ENCODE measurements at regions of chr17 and their contacts with region 1.

Region 1: GRCh38 chr17:10727192-10727976 is 2.4 kb downstream of the TMEM220 start:
- DNase-seq: no peak
- ATAC-seq: no peak
- H3K4me3 ChIP-seq: no peak overlapping the region
- H3K27ac ChIP-seq: no peak overlapping the region
- H3K4me1 ChIP-seq: peaks cover 3% of the 10 kb centered on the region
- H3K27me3 ChIP-seq: no peaks in the 10 kb centered on the region
- CTCF ChIP-seq: no peak

Region 2: DNA sequence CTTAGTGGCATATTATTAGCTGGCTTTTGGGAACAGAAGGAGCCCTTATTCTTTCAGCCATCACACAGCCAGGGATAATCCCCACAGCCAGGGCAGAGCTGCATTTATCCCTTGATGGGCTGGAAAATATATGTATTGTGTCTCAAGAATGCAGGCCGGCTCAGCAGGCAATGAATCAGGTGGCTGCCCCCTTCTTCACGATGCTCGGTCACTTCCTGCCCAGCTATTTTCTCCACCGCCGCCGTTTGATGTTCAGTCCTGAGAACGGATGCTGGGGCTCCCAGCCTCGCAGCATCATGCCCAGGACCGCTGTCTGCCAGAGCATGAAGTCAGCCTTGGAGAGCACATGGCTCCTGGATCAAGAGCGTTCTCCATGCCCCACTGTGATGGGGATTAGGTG is 65.9 kb before region 1 on chr17:
- intact Hi-C with region 1: no loop called
- DNase-seq: no peak
- ATAC-seq: no peak
- H3K4me3 ChIP-seq: no peak overlapping the region
- H3K27ac ChIP-seq: no peak overlapping the region
- H3K4me1 ChIP-seq: no peaks in the 10 kb centered on the region
- H3K27me3 ChIP-seq: no peaks in the 10 kb centered on the region
- CTCF ChIP-seq: no peak

Region 3: GRCh38 chr17:10705727-10706126 is 21.7 kb before region 1 on chr17:
- intact Hi-C with region 1: loop called in 1 of 2 experiments (anchors 2 kb)
- DNase-seq: no peak
- ATAC-seq: peak in 2 of 4 donors; percentile 59 to 61
- H3K4me3 ChIP-seq: no peak overlapping the region
- H3K27ac ChIP-seq: no peak overlapping the region
- H3K4me1 ChIP-seq: peaks cover 19% of the 10 kb centered on the region
- H3K27me3 ChIP-seq: no peaks in the 10 kb centered on the region
- CTCF ChIP-seq: no peak

Measured in psoas muscle (tissue), 8 donors.